ENCODE measurements at regions of chr1 and their contacts with region 1.

Region 1: DNA sequence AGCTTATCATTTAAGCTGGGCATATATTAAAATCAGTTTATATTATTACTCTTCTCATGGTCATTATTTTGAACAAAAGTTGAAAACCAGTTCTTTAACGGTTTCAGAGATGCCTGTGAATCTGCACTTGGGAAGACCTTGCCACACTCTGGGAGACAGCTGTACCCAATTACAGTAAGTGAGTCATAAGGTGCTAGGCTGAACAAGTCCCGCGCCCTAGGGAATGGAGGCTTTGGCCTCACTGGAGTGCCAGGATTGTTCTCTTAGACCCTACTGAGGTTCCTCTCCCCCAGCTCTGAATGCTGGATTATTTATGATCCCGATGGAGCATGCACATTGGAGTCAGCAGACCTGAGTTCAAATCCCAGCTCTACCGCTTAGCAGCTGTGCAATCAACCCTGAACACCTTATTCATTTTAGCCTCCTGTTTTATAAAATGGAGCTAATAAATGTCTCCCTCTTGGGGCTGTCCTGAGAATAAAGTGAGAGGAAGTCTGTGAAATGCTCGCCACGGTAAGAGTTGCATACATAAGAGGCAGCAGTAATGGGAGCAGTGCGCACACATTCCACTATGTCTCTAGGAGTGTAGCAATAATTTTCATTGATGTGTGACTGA is 266.2 kb downstream of the FOXD2 start:
- DNase-seq: no peak
- ATAC-seq: no peak

Region 2: DNA sequence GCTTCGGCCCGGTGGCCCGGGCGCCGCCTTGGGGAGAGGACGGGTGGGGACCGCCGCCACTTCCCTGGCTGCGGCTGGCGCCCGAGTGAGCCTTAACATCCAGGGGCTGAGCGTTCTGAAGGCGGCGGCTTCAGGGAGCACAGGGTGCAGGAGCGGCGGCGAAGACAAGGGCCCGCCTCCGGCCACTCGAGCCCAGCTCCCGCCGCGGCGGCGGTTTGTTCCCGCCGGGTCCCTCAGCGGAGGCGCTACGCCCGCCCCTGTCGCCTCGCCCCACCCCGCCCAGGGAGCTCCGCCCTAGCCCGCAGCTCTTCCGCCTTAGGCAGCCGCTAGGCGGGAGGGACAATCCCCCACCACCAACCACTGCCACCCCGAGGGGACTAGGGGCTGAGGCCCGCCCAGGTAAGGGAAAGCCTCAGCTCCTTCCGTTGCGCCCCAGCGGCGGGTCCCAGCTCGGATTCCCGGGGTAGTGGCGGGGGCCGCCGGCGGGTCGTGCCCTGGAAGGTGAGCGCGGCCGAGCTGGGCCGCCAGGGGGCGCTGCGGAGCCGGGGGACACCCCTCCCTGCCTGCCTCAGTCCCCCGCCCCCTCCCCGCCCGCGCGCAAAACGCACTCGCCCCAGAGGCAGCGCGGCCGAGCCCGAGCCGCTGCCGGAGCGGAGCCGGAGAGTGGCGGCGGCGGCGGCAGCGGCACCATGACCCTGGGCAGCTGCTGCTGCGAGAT is 266.5 kb before region 1 on chr1 and contains the start of gene FOXD2:
- intact Hi-C with region 1: loop called (anchors 5 kb)
- DNase-seq: peak; percentile 95
- ATAC-seq: peak; percentile 83
- total RNA-seq, gene FOXD2: 12.3 TPM